Activated CD4-positive, alpha-beta T cell treated with anti-CD3 and anti-CD28 coated beads for 36 hours (primary cell): ENCODE measurements at regions of chr17 and their contacts with region 1.

Region 1: DNA sequence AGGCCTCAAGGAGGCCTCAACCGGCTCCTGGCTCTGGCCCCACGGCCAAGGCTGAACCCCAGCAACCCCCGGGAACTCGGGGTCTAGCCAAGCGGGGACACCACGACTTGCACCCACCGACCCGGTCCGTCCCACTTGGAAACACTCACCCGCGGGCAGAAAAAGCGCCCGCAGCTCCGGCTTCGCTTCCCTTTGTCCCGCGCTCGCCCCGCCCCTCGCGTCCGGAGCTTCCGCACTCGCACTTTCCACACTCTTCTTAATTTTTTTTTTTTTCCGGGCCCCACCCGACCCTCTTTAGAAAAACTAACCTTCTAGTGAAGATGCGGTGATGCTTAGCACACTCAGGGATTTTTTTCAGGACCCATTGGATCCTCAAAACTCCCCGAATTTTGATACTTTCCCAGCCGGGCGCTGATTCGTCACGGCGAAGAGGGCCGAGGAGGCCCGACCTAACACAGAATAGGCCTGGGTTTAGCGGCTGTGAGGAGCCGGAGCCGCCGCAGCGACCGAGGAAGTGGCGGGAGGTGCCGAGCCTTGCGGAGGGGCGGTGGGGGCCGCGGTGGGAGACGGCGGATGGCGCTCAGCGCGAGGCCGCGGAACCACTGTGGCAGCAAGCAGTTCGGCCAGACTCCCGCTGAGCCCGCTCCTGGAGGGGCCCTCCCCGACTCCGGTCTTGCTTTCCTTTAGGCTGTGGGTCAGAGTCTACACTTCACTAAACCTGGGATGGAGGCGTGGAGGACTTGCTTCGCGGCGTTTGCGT is at the start of gene SMARCE1:
- DNase-seq: peak; percentile 79
- ATAC-seq: peak; percentile 81
- H3K4me3 Mint-ChIP-seq: peak within 1 kb of the TSS; percentile 97
- H3K27ac Mint-ChIP-seq: peak within 1 kb of the TSS; percentile 99
- H3K4me1 Mint-ChIP-seq: peaks cover 40% of the 10 kb centered on the region
- H3K27me3 Mint-ChIP-seq: no peaks in the 10 kb centered on the region
- total RNA-seq, gene SMARCE1: 99.7 to 122 TPM

Region 2: GRCh38 chr17:40632216-40632615 is 15.6 kb before region 1 on chr17:
- CTCF ChIA-PET with region 1: interaction called, 17 read pairs
- POLR2A ChIA-PET with region 1: no interaction called
- intact Hi-C with region 1: no loop called
- DNase-seq: no peak
- ATAC-seq: no peak
- H3K4me3 Mint-ChIP-seq: no peak overlapping the region
- H3K27ac Mint-ChIP-seq: peak overlapping the region; percentile 66
- H3K4me1 Mint-ChIP-seq: peaks cover 13% of the 10 kb centered on the region
- H3K27me3 Mint-ChIP-seq: no peaks in the 10 kb centered on the region

Region 3: DNA sequence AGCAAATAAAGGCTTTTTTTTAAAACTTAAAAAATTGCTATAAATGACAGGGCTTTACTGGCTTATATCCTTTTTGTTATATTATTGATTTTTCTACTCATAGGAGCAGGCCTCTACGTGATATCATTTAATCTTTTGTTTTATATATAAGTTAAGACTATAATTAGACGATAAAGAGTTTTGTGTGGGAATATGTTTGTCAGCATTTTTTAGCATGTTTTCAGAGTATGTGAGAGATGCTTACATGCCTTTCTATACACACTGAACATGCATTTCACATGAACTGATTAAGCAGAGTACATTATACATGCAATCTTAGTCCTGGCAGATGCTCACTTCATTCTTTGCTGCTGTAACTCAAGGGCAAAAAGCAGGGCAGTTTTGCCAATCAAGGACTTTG is 24.9 kb after region 1 on chr17:
- CTCF ChIA-PET with region 1: no interaction called
- POLR2A ChIA-PET with region 1: no interaction called
- intact Hi-C with region 1: no loop called
- DNase-seq: no peak
- ATAC-seq: no peak
- H3K4me3 Mint-ChIP-seq: no peak overlapping the region
- H3K27ac Mint-ChIP-seq: no peak overlapping the region
- H3K4me1 Mint-ChIP-seq: no peaks in the 10 kb centered on the region
- H3K27me3 Mint-ChIP-seq: peaks cover 18% of the 10 kb centered on the region

Region 4: DNA sequence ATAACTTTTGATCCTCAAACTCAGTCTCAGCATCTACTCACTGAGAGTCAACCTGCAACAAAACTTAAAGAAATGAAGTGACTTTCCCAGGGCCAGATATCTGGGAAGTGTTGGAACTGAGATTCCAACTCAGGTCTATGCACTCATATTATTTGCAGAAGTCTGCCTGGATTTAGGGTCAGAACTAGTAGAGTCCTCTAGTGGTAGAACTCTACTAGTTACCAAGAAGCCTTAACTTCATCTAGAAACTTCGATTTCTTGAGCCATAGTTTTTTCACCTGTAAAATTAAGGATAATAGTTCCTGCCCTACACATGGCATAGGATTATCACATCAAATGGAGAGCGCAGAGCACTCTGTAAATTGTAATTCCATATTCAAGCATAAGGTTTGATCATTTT is 79.1 kb after region 1 on chr17:
- CTCF ChIA-PET with region 1: no interaction called
- POLR2A ChIA-PET with region 1: no interaction called
- intact Hi-C with region 1: no loop called
- DNase-seq: no peak
- ATAC-seq: no peak
- H3K4me3 Mint-ChIP-seq: no peak overlapping the region
- H3K27ac Mint-ChIP-seq: no peak overlapping the region
- H3K4me1 Mint-ChIP-seq: peaks cover 2% of the 10 kb centered on the region
- H3K27me3 Mint-ChIP-seq: peaks cover 19% of the 10 kb centered on the region

Region 5: DNA sequence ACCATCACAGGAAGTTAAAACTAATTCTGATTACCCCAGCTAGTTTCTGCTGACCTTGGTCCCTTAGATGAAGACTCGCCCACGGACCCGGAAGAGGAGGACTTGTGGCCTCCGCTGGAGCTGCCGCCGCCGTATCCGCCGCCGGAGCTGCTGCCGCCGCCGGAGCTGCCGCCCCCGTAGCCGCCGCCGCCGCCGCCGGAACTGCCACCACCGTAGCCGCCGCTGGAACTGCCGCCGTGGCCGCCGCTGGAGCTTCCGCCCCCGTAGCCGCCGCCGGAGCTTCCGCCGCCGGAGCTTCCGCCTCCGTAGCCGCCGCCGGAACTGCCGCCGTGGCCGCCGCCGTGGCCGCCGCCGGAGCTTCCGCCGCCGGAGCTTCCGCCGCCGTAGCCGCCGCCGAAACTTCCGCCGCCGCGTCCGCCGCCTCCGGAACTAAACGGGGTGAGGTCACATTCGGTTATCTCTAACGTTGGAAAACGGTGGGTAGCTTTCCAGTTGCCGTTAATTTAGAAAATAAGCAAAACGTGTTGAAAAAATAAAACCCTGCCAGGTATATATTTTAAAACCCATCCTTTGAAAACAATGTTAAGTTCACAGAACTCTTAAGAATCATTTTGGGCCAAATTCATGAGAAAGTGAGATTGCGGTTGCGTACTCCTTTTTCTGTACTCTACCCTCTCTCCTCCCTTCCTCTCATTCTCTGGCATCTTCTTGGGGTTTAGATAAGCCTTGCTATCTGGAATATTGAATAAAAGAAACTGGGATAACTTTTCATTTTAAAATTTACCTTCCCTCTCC is 171.1 kb after region 1 on chr17:
- CTCF ChIA-PET with region 1: no interaction called
- POLR2A ChIA-PET with region 1: interaction called, 4 read pairs
- intact Hi-C with region 1: loop called in 1 of 2 experiments (anchors 1 kb)
- DNase-seq: peak; percentile 91
- ATAC-seq: peak; percentile 84
- H3K4me3 Mint-ChIP-seq: peak overlapping the region; percentile 95
- H3K27ac Mint-ChIP-seq: peak overlapping the region; percentile 97
- H3K4me1 Mint-ChIP-seq: peaks cover 25% of the 10 kb centered on the region
- H3K27me3 Mint-ChIP-seq: peaks cover 1% of the 10 kb centered on the region